MCF 10A (cell line): ENCODE measurements at regions of chr20 and their contacts with region 1.

Region 1: GRCh38 chr20:5100684-5101347 is 18.9 kb downstream of the PCNA start:
- DNase-seq: peak; percentile 77
- H3K4me3 Mint-ChIP-seq: no peak overlapping the region
- H3K27ac Mint-ChIP-seq: peak overlapping the region; percentile 49
- H3K4me1 Mint-ChIP-seq: no peaks in the 10 kb centered on the region
- H3K27me3 Mint-ChIP-seq: no peaks in the 10 kb centered on the region
- CTCF ChIP-seq: peak; percentile 77

Region 2: GRCh38 chr20:4740774-4741431 is 359.9 kb before region 1 on chr20:
- CTCF ChIA-PET with region 1: interaction called, 19 read pairs
- POLR2A ChIA-PET with region 1: no interaction called
- intact Hi-C with region 1: no loop called
- DNase-seq: peak; percentile 53
- H3K4me3 Mint-ChIP-seq: no peak overlapping the region
- H3K27ac Mint-ChIP-seq: no peak overlapping the region
- H3K4me1 Mint-ChIP-seq: no peaks in the 10 kb centered on the region
- H3K27me3 Mint-ChIP-seq: peaks cover 13% of the 10 kb centered on the region
- CTCF ChIP-seq: peak; percentile 62

Region 3: GRCh38 chr20:5001174-5002076 is 99.4 kb before region 1 on chr20 and contains the start of gene SLC23A2:
- CTCF ChIA-PET with region 1: interaction called, 23 read pairs
- POLR2A ChIA-PET with region 1: interaction called, 10 read pairs
- intact Hi-C with region 1: loop called (anchors 10 kb)
- DNase-seq: no peak
- H3K4me3 Mint-ChIP-seq: peak within 1 kb of the TSS; percentile 85
- H3K27ac Mint-ChIP-seq: peak within 1 kb of the TSS; percentile 81
- H3K4me1 Mint-ChIP-seq: peaks cover 20% of the 10 kb centered on the region
- H3K27me3 Mint-ChIP-seq: no peaks in the 10 kb centered on the region
- CTCF ChIP-seq: no peak
- total RNA-seq, gene SLC23A2: 24.0 and 26.5 TPM in 2 replicates

Region 4: DNA sequence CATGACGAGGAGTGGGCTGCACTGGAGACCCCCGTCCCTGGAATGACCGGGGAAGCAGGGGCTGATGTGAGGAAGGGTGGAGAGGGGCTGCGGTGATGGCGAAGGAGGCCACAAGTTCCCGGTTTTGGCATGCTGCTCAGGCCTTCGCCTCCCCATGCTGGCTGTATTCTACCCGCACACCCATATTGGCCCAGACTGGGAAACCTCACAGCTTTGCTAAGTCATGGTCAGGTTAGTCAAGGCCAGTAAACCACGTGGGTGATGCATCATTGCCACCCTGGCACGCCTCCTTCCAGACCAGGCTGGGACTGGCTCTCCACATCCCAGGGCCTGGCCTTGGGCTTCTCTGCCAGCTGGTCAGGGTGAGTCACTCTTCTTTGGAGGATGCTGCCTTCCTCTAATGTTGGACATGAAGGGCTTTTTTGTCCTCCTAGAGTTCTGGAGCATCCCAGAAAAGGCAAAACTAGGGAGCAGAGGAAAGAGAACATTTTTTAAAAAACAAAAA is 34.9 kb before region 1 on chr20:
- CTCF ChIA-PET with region 1: interaction called, 11 read pairs
- POLR2A ChIA-PET with region 1: interaction called, 5 read pairs
- intact Hi-C with region 1: no loop called
- DNase-seq: peak; percentile 99
- H3K4me3 Mint-ChIP-seq: no peak overlapping the region
- H3K27ac Mint-ChIP-seq: peak overlapping the region; percentile 98
- H3K4me1 Mint-ChIP-seq: peaks cover 26% of the 10 kb centered on the region
- H3K27me3 Mint-ChIP-seq: no peaks in the 10 kb centered on the region
- CTCF ChIP-seq: no peak

Region 5: GRCh38 chr20:5080384-5080877 is 20.4 kb before region 1 on chr20:
- CTCF ChIA-PET with region 1: interaction called, 13 read pairs
- POLR2A ChIA-PET with region 1: interaction called, 3 read pairs
- intact Hi-C with region 1: no loop called
- DNase-seq: peak; percentile 55
- H3K4me3 Mint-ChIP-seq: no peak overlapping the region
- H3K27ac Mint-ChIP-seq: peak overlapping the region; percentile 50
- H3K4me1 Mint-ChIP-seq: no peaks in the 10 kb centered on the region
- H3K27me3 Mint-ChIP-seq: no peaks in the 10 kb centered on the region
- CTCF ChIP-seq: no peak

Region 6: DNA sequence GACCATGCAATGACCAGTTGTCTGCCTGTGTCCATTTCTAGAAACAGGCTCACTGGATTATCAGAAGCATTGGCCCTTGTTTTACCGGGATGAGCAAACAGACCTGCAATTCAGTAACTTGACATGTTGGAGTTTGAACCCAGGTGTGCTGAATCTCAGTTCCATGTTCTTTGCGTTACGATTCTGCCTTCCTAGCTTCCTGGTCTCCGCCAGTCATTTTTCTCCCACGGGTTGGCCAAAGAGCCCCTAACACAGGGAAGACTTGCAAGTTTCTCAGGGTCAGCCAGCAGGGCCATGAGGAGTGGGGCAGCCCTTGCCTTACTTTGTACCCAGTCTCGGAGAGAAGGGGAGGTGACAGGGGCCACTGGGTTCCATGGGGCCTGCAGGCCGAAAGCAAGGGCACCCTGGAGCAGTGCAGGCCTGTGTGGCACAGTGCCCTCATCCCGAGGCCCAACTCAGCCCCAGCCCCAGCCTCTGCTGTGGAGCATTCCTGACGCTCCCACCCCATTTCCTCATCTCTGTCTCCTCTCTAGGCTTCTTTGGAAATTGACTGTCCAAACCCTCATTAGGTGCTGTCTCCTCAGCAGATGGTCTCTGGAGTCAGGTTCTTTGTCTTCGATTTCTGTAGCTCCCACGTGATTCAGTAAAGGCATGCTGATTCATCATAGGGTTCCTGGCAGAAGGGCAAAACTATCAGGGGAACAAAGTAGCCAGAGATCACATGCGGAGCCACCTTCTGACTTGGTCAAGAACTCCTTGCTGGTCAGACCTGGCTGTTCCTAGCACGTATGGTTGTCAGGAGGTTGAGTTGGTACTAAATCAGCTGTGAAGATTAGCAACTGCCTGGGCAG is 49.6 kb after region 1 on chr20:
- CTCF ChIA-PET with region 1: no interaction called
- POLR2A ChIA-PET with region 1: no interaction called
- intact Hi-C with region 1: no loop called
- DNase-seq: peak; percentile 47
- H3K4me3 Mint-ChIP-seq: no peak overlapping the region
- H3K27ac Mint-ChIP-seq: peak overlapping the region; percentile 11
- H3K4me1 Mint-ChIP-seq: peaks cover 25% of the 10 kb centered on the region
- H3K27me3 Mint-ChIP-seq: no peaks in the 10 kb centered on the region
- CTCF ChIP-seq: no peak